ENCODE measurements at regions of chr17 and their contacts with region 1.

Region 1: GRCh38 chr17:49556223-49556971 is 19.3 kb upstream of the NXPH3 start:
- DNase-seq: peak; percentile 86
- ATAC-seq: peak; percentile 93
- H3K4me3 ChIP-seq: no peak overlapping the region
- H3K27ac ChIP-seq: no peak overlapping the region
- H3K4me1 ChIP-seq: peaks cover 6% of the 10 kb centered on the region
- H3K27me3 ChIP-seq: peaks cover 11% of the 10 kb centered on the region
- CTCF ChIP-seq: peak; percentile 100

Region 2: DNA sequence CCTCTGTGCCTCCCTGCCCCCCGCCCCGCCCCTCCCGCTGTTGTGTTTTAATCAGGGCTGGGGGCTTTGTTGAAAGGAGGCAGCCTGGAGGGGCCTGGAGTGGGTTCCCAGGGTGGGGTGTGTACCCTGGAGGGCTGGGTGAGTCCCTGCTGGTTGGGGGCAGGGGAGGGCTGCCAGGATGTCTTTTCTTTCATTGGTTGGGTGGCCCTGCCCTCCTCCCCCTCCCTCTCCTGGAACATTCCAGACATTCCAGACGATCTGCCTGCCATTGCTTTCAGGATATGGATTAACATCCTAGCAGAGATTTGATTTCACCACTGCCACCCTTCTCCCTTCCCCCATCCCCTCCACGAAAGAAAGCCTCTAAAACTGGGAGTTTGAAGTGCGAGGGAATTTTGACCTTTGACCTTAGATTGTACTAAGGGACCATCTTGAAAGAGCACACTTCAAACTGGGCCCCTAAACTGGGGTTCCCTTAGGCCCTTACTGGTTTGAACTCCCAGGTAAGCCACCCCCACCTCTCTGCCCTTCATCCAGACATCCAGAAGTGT is 533.9 kb before region 1 on chr17:
- intact Hi-C with region 1: no loop called
- DNase-seq: no peak
- ATAC-seq: peak; percentile 56
- H3K4me3 ChIP-seq: no peak overlapping the region
- H3K27ac ChIP-seq: no peak overlapping the region
- H3K4me1 ChIP-seq: no peaks in the 10 kb centered on the region
- H3K27me3 ChIP-seq: peaks cover 18% of the 10 kb centered on the region
- CTCF ChIP-seq: no peak

Region 3: DNA sequence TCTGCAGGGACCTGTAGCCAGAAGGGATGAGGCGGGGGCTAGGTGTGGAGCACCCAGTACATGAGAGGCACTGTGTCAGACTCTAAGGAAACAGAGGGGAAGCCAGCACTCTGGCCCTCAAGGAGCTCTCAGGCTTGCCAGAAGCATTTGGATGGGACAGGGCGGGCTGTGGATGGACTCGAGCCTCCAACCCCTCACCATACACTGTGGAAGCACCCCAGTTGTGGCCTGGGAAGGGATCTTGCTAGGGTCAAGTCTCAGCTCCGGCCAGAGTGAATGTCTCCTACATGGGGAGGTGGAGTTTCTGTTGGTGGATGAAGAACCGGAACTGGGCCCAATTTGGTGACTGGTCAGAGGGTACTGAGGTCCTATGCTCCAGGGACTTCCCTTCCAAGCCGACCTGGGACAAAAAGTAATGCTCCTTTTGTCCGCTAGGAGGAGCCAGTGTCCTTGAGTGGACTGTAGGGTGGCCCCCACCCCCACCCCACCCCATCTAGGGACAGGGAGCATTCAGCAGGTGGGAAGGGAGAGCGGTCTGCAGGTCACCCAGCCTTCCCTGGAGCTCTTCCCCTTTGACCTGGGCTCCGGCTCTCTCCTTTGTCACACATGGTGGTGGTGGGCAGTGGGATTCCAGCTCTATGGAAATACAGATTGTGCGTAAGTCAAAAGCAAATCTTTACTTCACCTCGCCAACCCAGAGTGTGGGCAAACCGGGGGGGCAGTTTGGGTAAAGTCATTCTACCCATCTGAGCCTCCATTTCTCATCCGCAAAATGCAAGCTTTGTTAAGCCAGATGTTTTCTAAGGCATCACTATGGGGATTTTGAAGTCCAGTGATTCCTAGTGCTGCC is 121.4 kb before region 1 on chr17:
- intact Hi-C with region 1: loop called (anchors 10 kb)
- DNase-seq: no peak
- ATAC-seq: peak; percentile 71
- H3K4me3 ChIP-seq: no peak overlapping the region
- H3K27ac ChIP-seq: no peak overlapping the region
- H3K4me1 ChIP-seq: no peaks in the 10 kb centered on the region
- H3K27me3 ChIP-seq: peaks cover 20% of the 10 kb centered on the region
- CTCF ChIP-seq: peak; percentile 69

Region 4: GRCh38 chr17:49603720-49604119 is 47.3 kb after region 1 on chr17:
- intact Hi-C with region 1: no loop called
- DNase-seq: no peak
- ATAC-seq: no peak
- H3K4me3 ChIP-seq: no peak overlapping the region
- H3K27ac ChIP-seq: no peak overlapping the region
- H3K4me1 ChIP-seq: peaks cover 7% of the 10 kb centered on the region
- H3K27me3 ChIP-seq: no peaks in the 10 kb centered on the region
- CTCF ChIP-seq: no peak

Region 5: GRCh38 chr17:49779739-49780231 is 223.4 kb after region 1 on chr17:
- intact Hi-C with region 1: loop called (anchors 10 kb)
- DNase-seq: no peak
- ATAC-seq: peak; percentile 71
- H3K4me3 ChIP-seq: no peak overlapping the region
- H3K27ac ChIP-seq: no peak overlapping the region
- H3K4me1 ChIP-seq: peaks cover 32% of the 10 kb centered on the region
- H3K27me3 ChIP-seq: no peaks in the 10 kb centered on the region
- CTCF ChIP-seq: peak; percentile 58